ENCODE measurements at regions of chr9 and their contacts with region 1.

Region 1: DNA sequence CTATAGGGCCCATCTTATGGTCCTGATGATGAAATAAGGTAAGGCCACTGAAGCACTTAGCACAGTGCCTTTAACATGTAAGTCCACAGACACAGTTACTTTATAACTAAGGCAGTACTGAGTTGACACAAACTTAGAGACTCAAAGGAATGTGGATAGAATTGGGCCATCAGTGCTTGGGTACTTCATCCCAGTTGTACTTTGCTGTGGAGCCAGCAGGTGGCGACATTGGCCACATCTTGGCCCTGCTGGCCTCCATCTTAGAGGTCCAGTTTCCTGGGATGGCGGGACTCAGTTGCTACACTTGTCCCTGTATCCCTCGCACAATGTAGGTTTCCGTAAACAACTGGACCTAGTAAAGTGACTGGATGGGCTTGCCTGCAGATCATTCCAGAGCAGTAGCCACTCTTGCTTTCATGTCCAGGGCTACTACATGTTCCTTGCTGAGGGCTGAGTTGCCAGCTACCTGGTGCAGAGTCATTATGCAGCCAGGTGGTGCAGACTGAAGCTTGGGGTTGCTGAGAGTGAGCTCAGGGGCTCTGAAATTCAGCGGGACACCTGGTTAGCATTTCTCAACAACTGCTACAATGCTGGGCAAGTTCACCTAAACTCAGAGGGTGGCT is 10.6 kb downstream of the MTAP start:
- DNase-seq: no peak
- ATAC-seq: peak; percentile 77
- H3K4me3 ChIP-seq: no peak overlapping the region
- H3K27ac ChIP-seq: peak overlapping the region; percentile 27
- H3K4me1 ChIP-seq: peaks cover 5 to 39% of the 10 kb centered on the region in 2 experiments; a peak in 3 of 4 replicates
- H3K27me3 ChIP-seq: no peaks in the 10 kb centered on the region
- CTCF ChIP-seq: peak; percentile 64 to 93 (median 87); a peak in 5 of 6 replicates
- POLR2A ChIP-seq: no peak
- RAD21 ChIP-seq: peak; percentile 88

Region 2: GRCh38 chr9:22037954-22038690 is 225.1 kb after region 1 on chr9:
- CTCF ChIA-PET with region 1: interaction called, 17 read pairs
- POLR2A ChIA-PET with region 1: no interaction called
- RAD21 ChIA-PET with region 1: interaction called in 1 of 2 experiments, 6 read pairs
- intact Hi-C with region 1: loop called (anchors 1 kb)
- DNase-seq: peak; percentile 33
- ATAC-seq: peak; percentile 57; the same call in 1 of the 2 replicates
- H3K4me3 ChIP-seq: no peak overlapping the region
- H3K27ac ChIP-seq: no peak overlapping the region
- H3K4me1 ChIP-seq: peaks cover 11 to 17% of the 10 kb centered on the region in 2 experiments
- H3K27me3 ChIP-seq: no peaks in the 10 kb centered on the region
- CTCF ChIP-seq: peak; percentile 48 to 60 (median 55); a peak in 4 of 6 replicates
- POLR2A ChIP-seq: no peak
- RAD21 ChIP-seq: peak; percentile 76

Region 3: GRCh38 chr9:22211593-22212360 is 398.7 kb after region 1 on chr9:
- CTCF ChIA-PET with region 1: interaction called, 8 read pairs
- POLR2A ChIA-PET with region 1: no interaction called
- RAD21 ChIA-PET with region 1: no interaction called
- intact Hi-C with region 1: loop called (anchors 5 kb)
- DNase-seq: peak; percentile 79
- ATAC-seq: peak; percentile 86
- H3K4me3 ChIP-seq: peak overlapping the region in 1 of 2 experiments; percentile 14; a peak in 1 of 4 replicates
- H3K27ac ChIP-seq: peak overlapping the region; percentile 52
- H3K4me1 ChIP-seq: peaks cover 56 to 57% of the 10 kb centered on the region in 2 experiments
- H3K27me3 ChIP-seq: no peaks in the 10 kb centered on the region
- CTCF ChIP-seq: no peak
- POLR2A ChIP-seq: no peak
- RAD21 ChIP-seq: peak; percentile 15

Region 4: DNA sequence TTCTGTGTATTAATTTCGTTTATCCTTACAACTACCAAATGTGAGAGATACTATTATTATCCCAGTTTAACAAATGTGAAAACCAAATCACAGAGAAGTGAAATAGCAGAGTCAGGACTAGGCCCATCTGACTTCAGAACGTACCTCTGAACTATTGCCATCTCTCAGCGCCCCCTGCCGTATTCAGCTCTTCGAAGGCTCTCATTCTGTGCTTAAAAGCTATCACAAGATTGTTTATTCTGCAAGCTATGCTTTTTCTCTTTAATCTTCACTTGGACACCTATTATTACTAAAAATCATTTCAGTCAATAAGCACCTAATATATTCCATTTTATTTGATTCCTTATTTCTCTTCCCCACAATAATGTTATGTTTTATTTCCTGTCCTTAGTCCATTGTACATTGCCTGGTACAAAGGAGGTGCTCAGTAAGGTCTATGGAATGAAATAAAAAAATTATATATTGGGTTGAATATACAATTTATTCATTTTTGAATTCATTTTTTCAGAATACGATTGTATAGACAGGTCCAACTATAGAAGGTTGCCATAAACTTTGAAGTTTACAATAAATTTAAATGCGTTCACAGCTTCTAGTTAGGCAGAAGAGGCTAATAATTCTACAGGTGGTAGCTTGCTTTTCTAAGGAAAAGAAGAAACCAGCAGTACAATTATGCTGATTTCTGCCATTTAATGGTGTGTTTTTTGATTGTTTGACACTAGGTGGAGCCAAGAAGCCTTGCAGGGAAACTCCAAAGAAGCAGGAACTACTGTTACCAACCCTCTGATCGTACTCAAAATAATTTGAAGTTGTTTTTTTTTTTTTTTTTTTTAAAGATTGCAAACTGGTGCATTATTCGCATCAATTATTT is 431.3 kb after region 1 on chr9:
- CTCF ChIA-PET with region 1: interaction called, 41 read pairs
- POLR2A ChIA-PET with region 1: interaction called, 6 read pairs
- RAD21 ChIA-PET with region 1: interaction called in 1 of 2 experiments, 6 read pairs
- intact Hi-C with region 1: loop called (anchors 1 kb)
- DNase-seq: peak; percentile 40
- ATAC-seq: peak; percentile 89
- H3K4me3 ChIP-seq: no peak overlapping the region
- H3K27ac ChIP-seq: no peak overlapping the region
- H3K4me1 ChIP-seq: peaks cover 8% of the 10 kb centered on the region in 2 experiments; a peak in 3 of 4 replicates
- H3K27me3 ChIP-seq: peaks cover 3% of the 10 kb centered on the region; the same call in 1 of the 2 replicates
- CTCF ChIP-seq: peak; percentile 53 to 63 (median 57); a peak in 5 of 6 replicates
- POLR2A ChIP-seq: no peak
- RAD21 ChIP-seq: peak; percentile 68

Region 5: DNA sequence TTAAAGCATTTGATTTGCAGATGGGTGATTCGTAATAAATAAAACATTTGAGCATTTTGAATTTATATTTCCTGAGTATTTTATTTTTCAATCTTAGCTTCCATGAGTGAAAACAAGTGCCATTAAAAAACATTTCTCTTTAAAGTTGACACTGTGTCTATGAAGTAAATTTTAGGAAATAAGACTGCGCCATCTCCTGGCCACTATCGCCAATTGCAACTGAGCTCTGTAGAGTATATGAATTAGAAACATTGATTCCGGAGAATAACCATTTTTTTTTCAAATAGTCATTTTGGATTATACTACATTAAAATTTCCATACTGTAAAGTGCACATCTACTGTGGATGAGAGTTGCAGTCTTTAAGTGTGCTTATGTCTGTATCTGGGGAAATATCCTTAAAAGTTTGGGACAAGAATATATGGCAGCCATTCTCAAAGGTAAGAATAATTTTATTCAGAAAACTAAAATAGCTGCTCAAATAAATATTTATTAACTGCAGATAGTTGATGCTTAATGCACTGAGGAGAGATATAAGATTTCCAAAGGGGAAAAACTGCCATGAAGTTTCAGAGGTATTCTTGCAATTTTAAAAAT is 639.5 kb after region 1 on chr9:
- CTCF ChIA-PET with region 1: interaction called, 8 read pairs
- POLR2A ChIA-PET with region 1: no interaction called
- RAD21 ChIA-PET with region 1: no interaction called
- intact Hi-C with region 1: loop called (anchors 1 kb)
- DNase-seq: peak; percentile 29
- ATAC-seq: peak; percentile 66
- H3K4me3 ChIP-seq: no peak overlapping the region
- H3K27ac ChIP-seq: no peak overlapping the region
- H3K4me1 ChIP-seq: no peaks in the 10 kb centered on the region
- H3K27me3 ChIP-seq: peaks cover 21% of the 10 kb centered on the region
- CTCF ChIP-seq: peak; percentile 70 to 89 (median 78)
- POLR2A ChIP-seq: no peak
- RAD21 ChIP-seq: peak; percentile 75

Measured in HCT116 (cell line).